ENCODE measurements at regions of chr5 and their contacts with region 1.

Region 1: GRCh38 chr5:171750311-171750788 is 35.3 kb upstream of the SMIM23 start:
- DNase-seq: peak; percentile 74
- ATAC-seq: peak; percentile 82

Region 2: GRCh38 chr5:171647032-171647903 is 103.1 kb before region 1 on chr5:
- intact Hi-C with region 1: no loop called
- DNase-seq: no peak
- ATAC-seq: peak; percentile 62

Region 3: DNA sequence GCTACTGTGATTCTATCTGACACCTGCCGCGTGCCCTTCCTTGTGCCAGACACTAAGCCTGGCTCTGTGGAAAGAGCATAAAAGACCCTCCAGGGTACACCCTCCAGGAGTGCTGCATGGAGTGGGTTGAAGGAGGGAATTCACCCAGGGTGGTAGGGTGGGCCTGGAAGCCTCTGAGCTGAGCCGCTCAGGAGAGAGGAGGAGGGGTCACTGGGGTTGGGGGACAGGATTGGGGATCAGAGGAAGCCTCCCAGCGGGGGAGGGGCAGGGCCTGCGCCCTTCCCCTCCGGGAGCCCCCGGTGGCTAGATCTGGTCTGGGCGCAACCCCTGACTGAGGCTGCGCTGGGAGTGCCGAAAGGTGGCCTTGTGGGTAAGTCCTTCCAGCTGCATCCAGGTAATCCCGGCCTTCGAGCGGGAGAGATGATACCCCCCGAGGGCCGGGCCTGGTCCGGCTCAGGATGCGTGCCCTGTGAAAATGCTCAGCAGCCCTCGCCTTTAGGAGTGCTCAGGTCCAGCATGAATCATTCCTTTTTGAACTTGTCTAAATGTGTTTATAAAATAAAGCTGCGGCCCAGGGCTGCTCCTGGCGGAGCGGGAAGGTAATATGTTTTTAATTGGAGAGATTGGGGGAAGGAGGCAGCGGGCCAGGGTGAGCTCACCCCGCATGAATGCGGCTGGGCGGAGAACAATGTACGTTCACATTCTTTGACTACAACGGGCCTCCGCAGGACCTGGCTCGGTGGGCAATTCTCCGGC is 82.8 kb before region 1 on chr5:
- intact Hi-C with region 1: no loop called
- DNase-seq: peak; percentile 73
- ATAC-seq: peak; percentile 77

Region 4: GRCh38 chr5:171840066-171840465 is 89.7 kb after region 1 on chr5:
- intact Hi-C with region 1: loop called (anchors 5 kb)
- DNase-seq: no peak
- ATAC-seq: no peak